ENCODE measurements at regions of chr2 and their contacts with region 1.

Region 1: DNA sequence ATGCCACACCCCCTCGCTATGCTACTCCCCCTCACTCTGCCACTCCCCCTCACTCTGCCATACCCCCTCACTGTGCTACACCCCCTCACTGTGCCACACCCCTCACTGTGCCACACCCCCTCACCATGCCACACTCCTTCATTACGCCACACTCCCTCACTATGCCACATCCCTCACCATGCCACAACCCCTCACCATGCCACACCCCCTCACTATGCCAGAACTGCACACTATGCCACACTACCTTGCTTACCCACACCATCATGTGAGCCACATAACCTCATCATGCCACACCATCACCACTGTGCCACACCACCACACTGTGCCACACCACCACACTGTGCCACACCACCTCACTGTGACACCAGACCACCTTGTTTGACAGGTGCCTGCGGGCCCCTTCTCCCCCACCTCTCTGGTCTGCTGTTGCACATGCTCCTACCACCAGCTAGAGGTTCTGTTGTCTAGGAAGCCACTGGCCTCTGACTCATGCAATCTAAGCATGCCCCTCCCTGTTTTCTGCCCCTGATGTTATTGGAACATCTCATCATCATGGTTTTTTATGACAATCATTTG is 22.0 kb downstream of the MARCHF4 start:
- DNase-seq: no peak
- H3K4me3 ChIP-seq: no peak overlapping the region
- CTCF ChIP-seq: no peak

Region 2: GRCh38 chr2:216308576-216308975 is 41.7 kb before region 1 on chr2:
- CTCF ChIA-PET with region 1: no interaction called
- POLR2A ChIA-PET with region 1: no interaction called
- DNase-seq: peak; percentile 81
- H3K4me3 ChIP-seq: no peak overlapping the region
- CTCF ChIP-seq: no peak

Region 3: DNA sequence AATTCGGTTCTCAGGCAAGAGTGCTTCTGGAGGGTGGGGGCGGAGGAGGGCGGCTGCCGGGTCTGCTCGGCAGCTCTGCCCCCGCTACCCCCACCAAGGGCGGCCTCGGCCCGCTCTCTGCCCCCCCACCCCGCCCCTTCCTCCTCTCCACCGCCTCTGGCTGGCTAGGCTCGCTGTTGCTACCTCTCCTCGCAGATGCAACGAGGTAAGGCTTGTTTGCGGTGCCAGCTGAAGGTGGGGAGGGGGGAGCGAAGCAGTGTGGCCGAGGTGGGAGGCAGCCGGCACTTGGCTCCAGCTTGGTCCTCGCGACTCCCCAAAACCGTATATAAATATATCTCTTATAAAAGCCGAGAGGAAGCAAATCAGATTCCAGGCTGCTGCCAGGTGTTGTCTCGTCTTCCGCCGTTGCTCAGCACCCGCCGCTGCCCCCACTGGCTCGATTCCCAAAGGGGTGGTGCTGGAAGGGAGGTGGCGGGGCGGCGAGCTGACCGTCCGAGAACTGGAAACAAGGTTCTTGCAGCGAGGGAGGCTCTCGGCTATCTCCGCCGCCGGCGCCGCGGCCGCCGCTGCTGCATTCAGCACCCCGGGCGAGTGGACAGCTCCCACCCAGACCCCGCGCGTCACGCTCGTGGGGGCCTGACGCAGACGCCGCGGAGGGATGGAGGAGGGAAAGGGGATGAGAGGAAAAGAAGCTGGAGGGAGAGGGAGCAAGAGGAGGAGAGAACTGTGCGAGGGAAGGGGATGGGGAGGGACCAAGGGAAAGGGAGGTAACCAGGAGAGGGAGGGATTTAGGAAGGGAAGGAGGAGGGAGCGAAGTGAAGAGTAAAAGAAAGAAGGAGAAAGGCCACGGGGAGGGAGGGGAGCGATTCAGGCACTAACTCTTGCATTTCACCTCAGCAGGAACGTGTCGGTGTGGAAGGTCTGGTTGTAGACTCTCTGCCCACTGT is 21.7 kb after region 1 on chr2 and contains the start of gene MARCHF4:
- CTCF ChIA-PET with region 1: interaction called, 6 read pairs
- POLR2A ChIA-PET with region 1: interaction called, 11 read pairs
- DNase-seq: peak; percentile 63
- H3K4me3 ChIP-seq: peak within 1 kb of the TSS; percentile 75
- CTCF ChIP-seq: no peak

Measured in AG04449 (cell line).